BJ (cell line): ENCODE measurements at regions of chr20 and their contacts with region 1.

Region 1: GRCh38 chr20:63759377-63759901 is 19.9 kb downstream of the SLC2A4RG start:
- DNase-seq: no peak
- H3K4me3 ChIP-seq: no peak overlapping the region
- H3K27me3 ChIP-seq: no peaks in the 10 kb centered on the region; the same call in 1 of the 2 replicates
- CTCF ChIP-seq: no peak

Region 2: GRCh38 chr20:63664861-63665716 is 94.3 kb before region 1 on chr20:
- CTCF ChIA-PET with region 1: no interaction called
- POLR2A ChIA-PET with region 1: no interaction called
- DNase-seq: no peak
- H3K4me3 ChIP-seq: no peak overlapping the region
- H3K27me3 ChIP-seq: no peaks in the 10 kb centered on the region
- CTCF ChIP-seq: no peak

Region 3: GRCh38 chr20:63775096-63775978 is 15.9 kb after region 1 on chr20:
- CTCF ChIA-PET with region 1: interaction called, 32 read pairs
- POLR2A ChIA-PET with region 1: no interaction called
- DNase-seq: no peak
- H3K4me3 ChIP-seq: peak overlapping the region; percentile 28
- H3K27me3 ChIP-seq: no peaks in the 10 kb centered on the region
- CTCF ChIP-seq: peak; percentile 87

Region 4: DNA sequence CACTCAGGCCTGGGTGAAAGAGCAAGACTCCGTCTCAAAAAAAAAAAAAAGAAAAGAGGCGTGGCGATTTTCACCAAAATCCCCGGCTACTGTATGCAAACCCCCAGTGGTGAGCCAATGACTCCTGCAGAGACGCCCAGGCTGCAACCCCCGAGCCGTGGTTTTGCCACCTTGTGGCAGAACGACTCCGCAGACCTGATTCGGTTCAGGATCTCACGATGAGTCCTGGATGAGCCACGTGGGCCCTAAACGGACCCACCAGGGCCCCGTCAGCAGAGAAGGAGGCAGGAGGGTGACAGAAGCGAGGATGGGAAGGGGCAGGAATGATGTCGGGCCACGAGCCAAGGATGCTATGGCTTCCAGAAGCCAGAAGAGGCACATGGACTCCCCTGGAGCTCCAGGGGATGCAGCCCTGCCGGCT is 22.6 kb after region 1 on chr20:
- CTCF ChIA-PET with region 1: interaction called, 11 read pairs
- POLR2A ChIA-PET with region 1: no interaction called
- DNase-seq: no peak
- H3K4me3 ChIP-seq: no peak overlapping the region
- H3K27me3 ChIP-seq: no peaks in the 10 kb centered on the region
- CTCF ChIP-seq: no peak